ENCODE measurements at regions of chr16 and their contacts with region 1.

Region 1: GRCh38 chr16:50741808-50742575 is at the start of gene CYLD:
- DNase-seq: peak; percentile 98 to 100
- ATAC-seq: peak; percentile 83 to 96 (median 85)
- H3K4me3 ChIP-seq: peak within 1 kb of the TSS; percentile 76
- H3K4me3 Mint-ChIP-seq: peak within 1 kb of the TSS; percentile 92
- H3K27ac ChIP-seq: peak within 1 kb of the TSS; percentile 99
- H3K27ac Mint-ChIP-seq: peak within 1 kb of the TSS; percentile 97 to 99
- H3K4me1 ChIP-seq: peaks cover 26% of the 10 kb centered on the region
- H3K4me1 Mint-ChIP-seq: peaks cover 50 to 52% of the 10 kb centered on the region in 2 donors
- H3K27me3 ChIP-seq: no peaks in the 10 kb centered on the region
- H3K27me3 Mint-ChIP-seq: no peaks in the 10 kb centered on the region
- CTCF ChIP-seq: no peak
- total RNA-seq, gene CYLD: 227 to 246 (median 236) TPM

Region 2: DNA sequence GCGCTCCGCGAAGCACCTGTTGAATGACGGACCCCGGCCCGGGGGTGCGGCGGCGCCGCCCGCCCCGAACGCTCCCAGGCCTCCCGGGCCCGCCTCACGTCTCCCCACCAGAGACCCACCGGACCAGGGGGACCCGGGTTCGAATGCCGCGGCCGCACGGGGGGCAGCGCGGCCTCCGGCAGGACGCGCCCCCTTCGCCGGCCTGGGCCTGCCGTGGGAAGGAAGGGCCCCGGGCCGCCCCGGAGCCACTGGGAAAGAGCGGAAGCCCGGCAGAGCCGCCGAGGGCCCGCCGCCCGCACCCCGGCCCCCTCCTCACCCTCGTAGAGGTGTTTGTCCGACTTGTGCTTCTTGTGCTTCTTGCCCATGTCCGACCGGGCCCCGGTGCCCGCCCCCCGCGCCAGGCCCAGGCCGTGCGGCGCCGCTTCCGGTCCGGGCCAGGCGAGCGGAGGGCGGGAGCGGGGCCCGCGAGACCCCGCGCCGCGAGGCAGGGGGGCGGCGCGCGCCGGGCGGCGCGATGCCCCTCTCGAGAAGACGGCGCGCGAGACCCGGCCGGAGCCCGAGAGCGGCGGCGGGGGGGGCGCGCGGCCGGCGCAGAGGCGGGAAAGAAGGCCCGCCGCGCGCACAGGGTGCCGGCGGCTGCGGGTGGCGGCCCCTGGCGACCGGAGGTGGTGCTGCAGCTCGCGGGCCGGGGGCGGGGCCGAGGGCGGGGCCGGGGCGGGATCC is 373.4 kb before region 1 on chr16 and contains the start of gene BRD7:
- intact Hi-C with region 1: loop called (anchors 10 kb)
- DNase-seq: peak; percentile 75 to 81
- ATAC-seq: peak; percentile 92 to 95 (median 93)
- H3K4me3 ChIP-seq: peak within 1 kb of the TSS; percentile 42
- H3K4me3 Mint-ChIP-seq: peak within 1 kb of the TSS; percentile 97
- H3K27ac ChIP-seq: peak within 1 kb of the TSS; percentile 78
- H3K27ac Mint-ChIP-seq: peak within 1 kb of the TSS; percentile 89 to 97
- H3K4me1 ChIP-seq: peaks cover 10% of the 10 kb centered on the region
- H3K4me1 Mint-ChIP-seq: peaks cover 43 to 47% of the 10 kb centered on the region in 2 donors
- H3K27me3 ChIP-seq: no peaks in the 10 kb centered on the region
- H3K27me3 Mint-ChIP-seq: peaks cover 3 to 6% of the 10 kb centered on the region in 2 donors
- CTCF ChIP-seq: no peak
- total RNA-seq, gene BRD7: 89.2 to 118 (median 94.9) TPM

Region 3: DNA sequence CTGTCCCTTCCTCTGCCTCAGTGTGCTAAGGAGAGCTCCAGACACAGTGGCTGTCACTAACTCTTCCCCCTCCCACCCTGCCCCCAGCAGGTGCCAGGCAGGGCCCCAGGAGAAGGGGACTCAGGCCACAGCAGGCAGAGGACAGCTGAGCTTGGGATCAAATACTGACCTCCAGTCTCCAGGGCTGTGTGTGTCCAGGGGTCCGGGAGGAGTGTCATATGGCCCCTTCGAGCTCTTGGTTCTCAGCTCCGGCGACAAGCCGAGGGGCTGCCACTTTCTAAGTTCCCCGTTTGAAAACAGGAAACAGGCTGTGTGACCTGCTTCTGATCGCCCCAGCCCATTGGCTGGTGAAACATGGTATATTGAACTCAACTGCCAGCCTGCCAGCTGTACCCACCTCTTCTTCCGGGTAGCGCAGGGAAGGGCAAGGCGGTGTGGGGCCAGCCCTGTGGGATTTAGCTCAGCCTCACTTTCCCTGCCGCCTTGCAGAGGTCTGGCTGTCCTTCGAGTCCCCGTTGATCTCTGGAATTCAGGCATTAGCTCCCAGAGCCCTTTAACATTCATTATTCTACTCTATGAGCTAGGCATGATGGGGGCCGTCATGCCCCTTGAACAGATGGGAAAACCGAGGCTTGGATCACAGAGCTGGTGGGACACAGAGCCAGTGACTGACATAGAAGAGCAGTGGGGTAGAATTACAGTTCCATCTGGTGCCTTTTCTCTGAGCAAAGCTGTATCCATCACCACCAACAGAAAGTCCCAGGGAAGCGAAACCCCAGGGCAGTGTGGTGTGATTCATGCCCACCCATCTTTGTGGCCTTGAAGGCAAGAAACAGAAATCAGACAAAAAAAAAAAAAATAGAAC is 60.7 kb before region 1 on chr16 and contains the start of gene SNX20:
- intact Hi-C with region 1: loop called (anchors 1 kb)
- DNase-seq: peak; percentile 53 to 84
- ATAC-seq: peak; percentile 79 to 82 (median 80)
- H3K4me3 ChIP-seq: peak within 1 kb of the TSS; percentile 74
- H3K4me3 Mint-ChIP-seq: peak within 1 kb of the TSS; percentile 85
- H3K27ac ChIP-seq: peak within 1 kb of the TSS; percentile 95
- H3K27ac Mint-ChIP-seq: peak within 1 kb of the TSS; percentile 95 to 96
- H3K4me1 ChIP-seq: peaks cover 87% of the 10 kb centered on the region
- H3K4me1 Mint-ChIP-seq: peaks cover 89% of the 10 kb centered on the region in 2 donors
- H3K27me3 ChIP-seq: no peaks in the 10 kb centered on the region
- H3K27me3 Mint-ChIP-seq: no peaks in the 10 kb centered on the region
- CTCF ChIP-seq: no peak
- total RNA-seq, gene SNX20: 33.0 to 53.9 (median 51.7) TPM

Region 4: GRCh38 chr16:50697851-50698767 is 43.9 kb before region 1 on chr16:
- intact Hi-C with region 1: loop called (anchors 2 kb)
- DNase-seq: peak; percentile 34 to 77
- ATAC-seq: peak; percentile 64 to 75 (median 67)
- H3K4me3 ChIP-seq: peak overlapping the region; percentile 41
- H3K4me3 Mint-ChIP-seq: peak overlapping the region; percentile 82
- H3K27ac ChIP-seq: peak overlapping the region; percentile 86
- H3K27ac Mint-ChIP-seq: peak overlapping the region; percentile 86 to 95
- H3K4me1 ChIP-seq: peaks cover 67% of the 10 kb centered on the region
- H3K4me1 Mint-ChIP-seq: peaks cover 42 to 51% of the 10 kb centered on the region in 2 donors
- H3K27me3 ChIP-seq: no peaks in the 10 kb centered on the region
- H3K27me3 Mint-ChIP-seq: peaks cover 0 to 10% of the 10 kb centered on the region in 2 donors
- CTCF ChIP-seq: no peak

Region 5: DNA sequence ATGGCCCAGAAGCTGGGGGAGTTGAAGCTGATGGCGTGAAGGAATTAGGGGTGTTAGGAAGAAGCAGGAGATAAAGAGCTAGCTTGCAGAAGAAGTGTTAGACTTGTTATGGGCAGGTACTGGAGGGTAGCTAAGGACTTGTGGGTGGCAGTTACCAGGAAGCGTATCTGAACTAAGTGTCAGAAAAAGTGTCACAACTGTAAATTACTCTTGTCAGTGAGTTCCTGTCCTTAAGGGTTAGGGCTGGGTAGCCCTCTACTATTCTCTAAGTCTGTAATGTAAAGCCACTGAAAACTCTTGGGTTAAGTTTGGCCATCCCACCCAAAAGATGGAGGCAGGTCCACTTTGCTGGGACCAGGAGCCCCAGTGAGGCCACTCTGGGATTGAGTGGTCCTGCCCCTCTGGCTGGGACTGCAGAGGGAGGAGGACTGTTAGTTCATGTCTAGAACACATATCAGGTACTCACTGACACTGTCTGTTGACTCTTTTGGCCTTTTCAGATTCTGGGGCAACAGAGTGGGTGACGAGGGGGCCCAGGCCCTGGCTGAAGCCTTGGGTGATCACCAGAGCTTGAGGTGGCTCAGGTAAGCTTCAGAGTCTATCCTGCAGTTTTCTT is 19.8 kb before region 1 on chr16:
- intact Hi-C with region 1: loop called (anchors 1 kb)
- DNase-seq: peak; percentile 28 to 63
- ATAC-seq: peak; percentile 88 to 96 (median 96)
- H3K4me3 ChIP-seq: no peak overlapping the region
- H3K4me3 Mint-ChIP-seq: peak overlapping the region; percentile 83
- H3K27ac ChIP-seq: peak overlapping the region; percentile 88
- H3K27ac Mint-ChIP-seq: peak overlapping the region; percentile 82 to 97
- H3K4me1 ChIP-seq: peaks cover 36% of the 10 kb centered on the region
- H3K4me1 Mint-ChIP-seq: peaks cover 47 to 50% of the 10 kb centered on the region in 2 donors
- H3K27me3 ChIP-seq: no peaks in the 10 kb centered on the region
- H3K27me3 Mint-ChIP-seq: no peaks in the 10 kb centered on the region
- CTCF ChIP-seq: no peak

Measured in natural killer cell (primary cell).